ENCODE measurements at regions of chr5 and their contacts with region 1.

Region 1: GRCh38 chr5:139517683-139518564 is 35.4 kb upstream of the STING1 start:
- DNase-seq: peak; percentile 97

Region 2: DNA sequence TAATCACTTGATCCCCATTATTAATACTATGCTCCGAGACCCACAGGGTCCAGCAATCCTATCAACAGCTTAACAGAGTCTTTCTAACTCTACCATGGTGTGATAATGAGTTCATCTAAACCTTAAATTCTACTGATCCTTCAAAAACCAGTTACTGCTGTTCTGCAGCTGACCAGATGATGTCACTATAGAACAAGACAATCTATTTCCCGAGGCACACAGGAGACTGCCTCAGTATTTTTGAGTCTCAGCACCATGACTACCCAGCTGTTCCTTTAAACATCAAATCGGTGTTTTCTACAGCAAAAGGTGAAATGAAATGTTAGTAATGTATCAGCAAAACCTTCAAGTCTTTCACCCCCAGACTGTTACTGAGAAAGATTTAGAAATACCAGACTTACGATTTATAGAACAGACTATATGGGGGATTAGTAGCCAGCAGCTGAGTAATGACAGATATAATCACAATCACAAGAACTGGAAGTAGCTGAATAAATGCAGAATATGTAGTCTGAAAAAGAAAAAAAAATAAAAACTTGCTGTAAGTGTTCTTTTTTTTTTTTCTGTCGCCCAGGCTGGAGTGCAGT is 95.5 kb before region 1 on chr5:
- intact Hi-C with region 1: loop called in 1 of 2 experiments (anchors 5 kb)
- DNase-seq: no peak

Region 3: GRCh38 chr5:139439013-139439903 is 78.7 kb before region 1 on chr5 and contains the start of gene DNAJC18:
- intact Hi-C with region 1: loop called in 1 of 2 experiments (anchors 5 kb)
- DNase-seq: peak; percentile 98
- total RNA-seq, gene DNAJC18: 13.3 to 18.8 TPM

Measured in posterior vena cava (tissue), 2 donors.